Upper lobe of right lung (tissue), 1 donor: ENCODE measurements at regions of chr11 and their contacts with region 1.

Region 1: GRCh38 chr11:65973439-65974110 is 12.0 kb downstream of the SART1 start:
- DNase-seq: no peak
- ATAC-seq: no peak
- H3K4me3 ChIP-seq: no peak overlapping the region
- H3K27ac ChIP-seq: no peak overlapping the region
- H3K4me1 ChIP-seq: peaks cover 12% of the 10 kb centered on the region
- H3K27me3 ChIP-seq: no peaks in the 10 kb centered on the region
- CTCF ChIP-seq: no peak

Region 2: GRCh38 chr11:65919146-65920033 is 54.2 kb before region 1 on chr11 and contains the start of gene DRAP1:
- intact Hi-C with region 1: loop called (anchors 10 kb)
- DNase-seq: peak; percentile 100
- ATAC-seq: peak; percentile 94
- H3K4me3 ChIP-seq: peak within 1 kb of the TSS; percentile 98
- H3K27ac ChIP-seq: peak within 1 kb of the TSS; percentile 94
- H3K4me1 ChIP-seq: peaks cover 48% of the 10 kb centered on the region
- H3K27me3 ChIP-seq: no peaks in the 10 kb centered on the region
- CTCF ChIP-seq: no peak
- total RNA-seq, gene DRAP1: 62.8 TPM